Endothelial cell of umbilical vein (primary cell): ENCODE measurements at regions of chr9 and their contacts with region 1.

Region 1: GRCh38 chr9:34403554-34404380 is 27.1 kb upstream of the MYORG start:
- DNase-seq: peak; percentile 66
- H3K4me3 ChIP-seq: no peak overlapping the region
- H3K27ac ChIP-seq: no peak overlapping the region
- H3K4me1 ChIP-seq: no peaks in the 10 kb centered on the region
- H3K27me3 ChIP-seq: no peaks in the 10 kb centered on the region
- CTCF ChIP-seq: peak; percentile 87 to 98
- POLR2A ChIP-seq: no peak

Region 2: DNA sequence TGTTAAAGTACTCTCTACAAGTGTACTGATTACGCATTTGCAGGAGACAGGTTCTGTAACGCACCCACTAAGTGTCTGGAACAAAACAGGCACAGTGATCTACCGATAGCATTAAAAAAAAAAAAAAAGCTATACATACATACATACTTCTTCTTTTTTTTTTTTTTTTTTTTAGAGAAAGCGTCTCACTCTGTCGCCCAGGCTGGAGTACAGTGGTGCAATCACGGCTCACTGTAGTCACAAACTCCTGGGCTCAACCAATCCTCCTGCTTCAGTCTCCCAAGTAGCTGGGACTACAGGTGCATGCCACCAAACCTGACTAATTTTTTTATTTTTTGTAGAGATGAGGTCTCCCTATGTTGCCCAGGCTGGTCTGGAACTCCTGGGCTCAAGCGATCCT is 82.3 kb before region 1 on chr9:
- CTCF ChIA-PET with region 1: no interaction called
- POLR2A ChIA-PET with region 1: no interaction called
- dilution Hi-C with region 1: no loop called
- intact Hi-C with region 1: no loop called
- DNase-seq: no peak
- H3K4me3 ChIP-seq: no peak overlapping the region
- H3K27ac ChIP-seq: no peak overlapping the region
- H3K4me1 ChIP-seq: no peaks in the 10 kb centered on the region
- H3K27me3 ChIP-seq: no peaks in the 10 kb centered on the region
- CTCF ChIP-seq: no peak
- POLR2A ChIP-seq: no peak

Region 3: GRCh38 chr9:34376596-34377403 is 27.0 kb before region 1 on chr9 and contains the start of gene MYORG:
- CTCF ChIA-PET with region 1: interaction called, 11 read pairs
- POLR2A ChIA-PET with region 1: no interaction called
- dilution Hi-C with region 1: no loop called
- intact Hi-C with region 1: no loop called
- DNase-seq: peak; percentile 84
- H3K4me3 ChIP-seq: peak within 1 kb of the TSS; percentile 44 to 79 (median 65)
- H3K27ac ChIP-seq: no peak within 1 kb of the TSS
- H3K4me1 ChIP-seq: peaks cover 11% of the 10 kb centered on the region
- H3K27me3 ChIP-seq: no peaks in the 10 kb centered on the region
- CTCF ChIP-seq: no peak
- POLR2A ChIP-seq: no peak
- total RNA-seq, gene MYORG: 6.3 and 7.0 TPM in 2 replicates

Region 4: DNA sequence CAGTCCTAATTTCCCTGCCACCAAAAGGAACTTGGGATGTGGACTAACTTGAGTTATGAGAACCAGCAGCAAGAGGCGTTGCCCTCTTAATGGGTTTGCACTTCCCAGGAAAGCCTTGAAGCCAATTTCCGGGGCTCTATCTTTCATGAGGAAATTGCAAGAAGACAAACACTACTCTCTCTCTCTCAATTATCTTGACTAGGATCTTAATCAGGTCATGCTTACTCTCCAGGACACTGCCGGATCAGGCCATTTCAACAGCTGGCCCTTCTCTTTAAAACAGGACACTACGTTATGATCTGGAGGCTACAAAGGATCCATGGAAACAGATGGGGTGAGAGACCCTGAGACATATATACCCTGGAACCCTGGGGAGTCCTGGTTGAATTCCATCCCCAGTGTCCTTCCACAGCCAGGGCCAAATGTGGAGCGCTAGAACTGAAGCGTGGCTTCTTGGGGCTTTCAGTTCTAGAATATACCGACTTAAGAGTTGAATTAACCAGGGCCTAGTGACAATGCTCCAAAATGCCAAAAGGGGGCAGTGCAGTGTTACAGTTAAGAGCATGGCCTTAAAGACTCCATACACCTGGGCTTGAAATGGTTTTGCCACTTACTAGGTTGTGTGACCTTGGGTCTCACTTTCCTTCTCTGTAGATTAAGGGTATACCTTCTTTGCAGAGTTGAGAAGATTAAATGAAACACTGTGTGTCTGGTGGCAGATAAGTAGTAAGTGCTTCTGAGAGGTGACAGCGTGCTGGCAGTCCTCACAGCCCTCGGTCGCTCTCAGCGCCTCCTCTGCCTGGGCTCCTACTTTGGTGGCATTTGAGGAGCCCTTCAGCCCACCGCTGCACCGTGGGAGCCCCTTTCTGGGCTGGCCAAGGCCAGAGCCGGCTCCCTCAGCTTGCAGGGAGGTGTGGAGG is 33.5 kb after region 1 on chr9:
- CTCF ChIA-PET with region 1: interaction called, 108 read pairs
- POLR2A ChIA-PET with region 1: no interaction called
- dilution Hi-C with region 1: no loop called
- intact Hi-C with region 1: no loop called
- DNase-seq: peak; percentile 83
- H3K4me3 ChIP-seq: no peak overlapping the region
- H3K27ac ChIP-seq: no peak overlapping the region
- H3K4me1 ChIP-seq: peaks cover 18% of the 10 kb centered on the region
- H3K27me3 ChIP-seq: no peaks in the 10 kb centered on the region
- CTCF ChIP-seq: peak; percentile 75 to 77
- POLR2A ChIP-seq: no peak

Region 5: GRCh38 chr9:34500623-34501267 is 97.0 kb after region 1 on chr9:
- CTCF ChIA-PET with region 1: interaction called, 117 read pairs
- POLR2A ChIA-PET with region 1: no interaction called
- dilution Hi-C with region 1: loop called (anchors 25 kb)
- intact Hi-C with region 1: loop called (anchors 1 kb)
- DNase-seq: peak; percentile 46
- H3K4me3 ChIP-seq: no peak overlapping the region
- H3K27ac ChIP-seq: no peak overlapping the region
- H3K4me1 ChIP-seq: peaks cover 13% of the 10 kb centered on the region
- H3K27me3 ChIP-seq: peaks cover 10 to 17% of the 10 kb centered on the region in 2 experiments
- CTCF ChIP-seq: peak; percentile 85 to 93
- POLR2A ChIP-seq: no peak

Region 6: GRCh38 chr9:34570376-34570775 is 166.6 kb after region 1 on chr9:
- CTCF ChIA-PET with region 1: interaction called, 11 read pairs
- POLR2A ChIA-PET with region 1: no interaction called
- dilution Hi-C with region 1: no loop called
- intact Hi-C with region 1: no loop called
- DNase-seq: no peak
- H3K4me3 ChIP-seq: no peak overlapping the region
- H3K27ac ChIP-seq: no peak overlapping the region
- H3K4me1 ChIP-seq: no peaks in the 10 kb centered on the region
- H3K27me3 ChIP-seq: peaks cover 6 to 7% of the 10 kb centered on the region in 2 experiments
- CTCF ChIP-seq: no peak
- POLR2A ChIP-seq: no peak

Region 7: DNA sequence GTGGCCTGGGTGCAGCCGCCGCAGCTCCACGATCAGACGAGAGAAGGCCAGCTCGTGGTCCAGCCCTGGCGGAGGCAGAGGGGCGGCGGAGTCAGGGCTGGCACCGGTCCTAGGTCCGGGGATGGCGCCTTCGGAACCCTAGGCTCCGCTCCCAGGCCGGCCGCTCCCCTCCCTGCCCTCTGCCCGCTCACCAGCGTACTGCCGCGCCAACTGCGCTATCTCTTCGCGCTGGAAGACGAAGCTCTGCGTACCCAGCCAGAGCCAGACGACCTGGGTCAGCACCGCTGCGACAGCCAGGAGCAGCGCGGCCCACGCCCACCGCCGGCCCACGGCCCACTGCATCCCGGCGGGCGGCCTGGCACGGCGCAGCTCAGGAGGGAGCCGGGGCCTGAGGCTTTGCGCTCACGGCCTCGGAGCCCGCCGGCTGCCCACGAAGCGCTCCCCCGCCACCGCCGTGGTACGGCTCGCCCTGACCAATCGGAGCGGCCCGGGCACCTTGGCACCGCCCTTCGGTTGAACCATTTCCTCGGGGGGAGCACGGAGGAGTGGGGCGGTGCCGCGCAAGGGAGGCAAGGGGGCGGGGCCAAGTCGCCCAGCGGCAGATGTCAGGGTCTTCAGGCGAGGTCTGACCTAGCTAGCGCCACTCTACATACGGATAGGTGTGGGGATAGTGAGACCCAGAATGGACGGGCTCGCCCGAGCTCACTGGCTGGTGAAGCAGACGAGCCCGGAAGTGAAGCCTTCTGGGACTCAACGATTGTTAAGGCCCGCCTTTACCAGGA is 233.8 kb after region 1 on chr9 and contains the start of gene SIGMAR1:
- CTCF ChIA-PET with region 1: interaction called, 14 read pairs
- POLR2A ChIA-PET with region 1: no interaction called
- dilution Hi-C with region 1: no loop called
- intact Hi-C with region 1: no loop called
- DNase-seq: peak; percentile 91
- H3K4me3 ChIP-seq: peak within 1 kb of the TSS; percentile 10 to 63 (median 47)
- H3K27ac ChIP-seq: peak within 1 kb of the TSS; percentile 33
- H3K4me1 ChIP-seq: peaks cover 16% of the 10 kb centered on the region
- H3K27me3 ChIP-seq: no peaks in the 10 kb centered on the region
- CTCF ChIP-seq: no peak
- POLR2A ChIP-seq: peak; percentile 81
- total RNA-seq, gene SIGMAR1: 74.1 and 81.2 TPM in 2 replicates